GM12878 (cell line): ENCODE measurements at regions of chr11 and their contacts with region 1.

Region 1: DNA sequence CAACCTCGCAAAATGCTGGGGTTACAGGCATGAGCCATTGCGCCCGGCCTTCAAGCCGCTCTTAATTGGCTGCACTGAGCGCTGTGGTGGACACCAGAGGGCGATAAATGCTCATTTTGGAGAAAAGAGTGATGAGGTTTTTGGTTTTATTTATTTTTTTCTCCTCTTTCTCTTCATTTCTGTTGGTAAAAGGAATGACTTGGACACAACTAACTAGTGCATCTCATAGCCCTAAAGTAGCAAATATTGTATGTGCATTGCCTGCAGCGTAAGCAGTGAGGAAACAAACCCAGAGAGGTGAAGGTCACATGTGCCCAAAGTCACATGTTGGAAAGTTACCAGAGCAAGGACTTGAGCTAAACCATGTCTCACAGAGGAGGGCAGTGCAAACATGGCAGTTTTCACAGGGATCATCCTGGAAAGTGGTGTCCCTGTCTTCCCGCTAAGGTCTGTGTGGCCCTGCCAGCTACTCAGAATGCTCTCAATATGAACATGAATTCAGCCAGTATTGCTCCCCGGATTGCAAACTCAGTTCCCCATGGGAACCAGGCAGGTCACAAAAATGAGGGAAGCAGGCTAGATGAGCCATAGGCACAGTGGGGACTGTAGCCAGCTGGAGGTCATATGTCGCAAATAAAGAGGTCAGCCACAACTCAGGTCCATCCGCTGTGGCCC is 8.6 kb upstream of the CD82 start:
- DNase-seq: peak; percentile 47
- ATAC-seq: peak; percentile 63
- H3K4me3 ChIP-seq: no peak overlapping the region
- H3K27ac ChIP-seq: no peak overlapping the region
- H3K4me1 ChIP-seq: peaks cover 27% of the 10 kb centered on the region
- H3K27me3 ChIP-seq: no peaks in the 10 kb centered on the region
- CTCF ChIP-seq: peak; percentile 62 to 71 (median 70)
- EP300 ChIP-seq: no peak
- POLR2A ChIP-seq: no peak
- RAD21 ChIP-seq: peak; percentile 93

Region 2: GRCh38 chr11:44409558-44410236 is 147.2 kb before region 1 on chr11:
- CTCF ChIA-PET with region 1: no interaction called
- POLR2A ChIA-PET with region 1: no interaction called
- RAD21 ChIA-PET with region 1: no interaction called
- SMC1A ChIA-PET with region 1: no interaction called
- in situ Hi-C with region 1: no loop called
- intact Hi-C with region 1: no loop called
- DNase-seq: no peak
- ATAC-seq: peak; percentile 48
- H3K4me3 ChIP-seq: no peak overlapping the region
- H3K27ac ChIP-seq: no peak overlapping the region
- H3K4me1 ChIP-seq: no peaks in the 10 kb centered on the region
- H3K27me3 ChIP-seq: no peaks in the 10 kb centered on the region
- CTCF ChIP-seq: no peak
- EP300 ChIP-seq: no peak
- POLR2A ChIP-seq: no peak
- RAD21 ChIP-seq: no peak

Region 3: GRCh38 chr11:44494785-44495184 is 62.1 kb before region 1 on chr11:
- CTCF ChIA-PET with region 1: no interaction called
- POLR2A ChIA-PET with region 1: no interaction called
- RAD21 ChIA-PET with region 1: no interaction called
- SMC1A ChIA-PET with region 1: no interaction called
- in situ Hi-C with region 1: no loop called
- intact Hi-C with region 1: no loop called
- DNase-seq: no peak
- ATAC-seq: no peak
- H3K4me3 ChIP-seq: no peak overlapping the region
- H3K27ac ChIP-seq: no peak overlapping the region
- H3K4me1 ChIP-seq: no peaks in the 10 kb centered on the region
- H3K27me3 ChIP-seq: no peaks in the 10 kb centered on the region
- CTCF ChIP-seq: no peak
- EP300 ChIP-seq: no peak
- POLR2A ChIP-seq: no peak
- RAD21 ChIP-seq: no peak

Region 4: GRCh38 chr11:44505581-44506054 is 51.3 kb before region 1 on chr11:
- CTCF ChIA-PET with region 1: no interaction called
- POLR2A ChIA-PET with region 1: no interaction called
- RAD21 ChIA-PET with region 1: no interaction called
- SMC1A ChIA-PET with region 1: no interaction called
- in situ Hi-C with region 1: no loop called
- intact Hi-C with region 1: no loop called
- DNase-seq: no peak
- ATAC-seq: no peak
- H3K4me3 ChIP-seq: no peak overlapping the region
- H3K27ac ChIP-seq: no peak overlapping the region
- H3K4me1 ChIP-seq: 0 out of 2 replicates have a peak, but pooled peaks cover 3% of the 10 kb centered on the region
- H3K27me3 ChIP-seq: no peaks in the 10 kb centered on the region; a peak in 1 of 4 replicates
- CTCF ChIP-seq: no peak
- EP300 ChIP-seq: no peak
- POLR2A ChIP-seq: no peak
- RAD21 ChIP-seq: no peak

Region 5: DNA sequence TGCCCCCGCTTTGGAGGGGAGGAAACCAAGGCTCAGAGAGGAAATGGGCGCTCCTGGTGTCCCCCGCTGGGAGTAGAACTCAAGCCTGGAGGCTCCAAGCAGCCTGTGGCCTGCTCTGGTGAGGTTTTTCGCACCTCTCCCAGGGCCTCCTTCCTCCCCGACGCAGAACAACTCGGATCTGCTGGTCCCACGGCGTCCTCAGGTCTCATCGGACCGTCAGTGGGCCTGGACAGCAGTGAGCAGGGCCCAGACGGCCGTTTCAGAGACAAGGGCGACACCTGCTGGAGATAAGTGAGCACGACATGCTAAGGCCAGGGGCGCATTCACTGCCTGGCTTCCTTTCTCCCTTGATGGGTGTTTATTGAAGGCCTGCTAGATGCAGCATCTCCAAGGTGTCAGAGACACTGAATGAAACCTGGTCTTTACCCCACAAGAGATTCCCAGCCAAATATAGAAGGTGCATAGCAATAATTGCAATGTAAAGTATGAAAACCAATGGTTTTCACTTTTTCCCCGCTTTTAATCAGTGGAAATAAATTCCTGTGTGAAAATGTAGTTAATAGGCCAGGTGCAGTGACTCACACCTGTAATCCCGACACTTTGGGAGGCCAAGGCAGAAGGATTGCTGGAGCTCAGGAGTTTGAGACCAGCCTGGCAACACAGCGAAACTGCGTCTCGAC is 18.4 kb before region 1 on chr11:
- CTCF ChIA-PET with region 1: interaction called, 11 read pairs
- POLR2A ChIA-PET with region 1: no interaction called
- RAD21 ChIA-PET with region 1: interaction called, 3 read pairs
- SMC1A ChIA-PET with region 1: interaction called, 5 read pairs
- in situ Hi-C with region 1: no loop called
- intact Hi-C with region 1: no loop called
- DNase-seq: no peak
- ATAC-seq: peak; percentile 99
- H3K4me3 ChIP-seq: no peak overlapping the region
- H3K27ac ChIP-seq: no peak overlapping the region
- H3K4me1 ChIP-seq: no peaks in the 10 kb centered on the region
- H3K27me3 ChIP-seq: peaks cover 0 to 1% of the 10 kb centered on the region in 2 experiments; a peak in 3 of 4 replicates
- CTCF ChIP-seq: peak; percentile 94 to 96 (median 96); a peak in 5 of 6 replicates
- EP300 ChIP-seq: no peak
- POLR2A ChIP-seq: no peak
- RAD21 ChIP-seq: peak; percentile 90

Region 6: DNA sequence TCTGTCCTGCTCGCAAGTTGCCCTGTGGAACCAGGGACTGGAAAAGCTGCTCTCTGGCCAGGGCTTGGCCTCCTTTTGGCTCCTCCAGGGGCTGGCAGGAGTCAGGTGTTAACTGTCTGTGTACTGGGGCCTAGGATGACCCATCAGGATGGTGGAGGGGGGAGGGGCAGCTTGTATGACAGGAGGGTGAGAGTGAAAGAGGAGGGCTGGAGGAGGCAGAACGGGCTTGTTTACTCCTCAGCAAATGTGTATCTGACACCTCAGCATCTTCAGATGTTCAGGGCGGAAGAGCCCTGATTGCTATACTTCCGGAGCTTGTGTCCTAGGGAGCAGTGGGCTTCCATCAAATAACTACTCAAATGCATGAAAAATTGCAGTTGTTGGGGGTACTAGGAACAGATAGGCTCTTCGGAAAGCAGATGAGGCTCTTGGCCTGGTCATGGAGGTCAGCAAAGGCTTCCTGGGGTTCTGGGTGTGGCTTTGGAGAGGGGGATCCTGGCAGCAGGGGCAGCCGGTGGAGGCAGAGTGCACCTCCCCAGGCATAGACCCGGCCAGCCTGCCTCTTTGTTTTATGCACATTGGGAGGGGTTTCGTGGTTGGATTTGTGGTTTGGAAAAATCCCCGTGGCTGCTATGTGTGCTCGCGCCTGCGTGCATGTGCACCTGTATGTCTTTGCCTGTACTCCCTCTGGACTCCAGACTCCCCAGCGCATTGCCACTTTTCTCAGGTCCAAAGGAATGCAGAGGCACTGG is 39.8 kb after region 1 on chr11:
- CTCF ChIA-PET with region 1: interaction called, 88 read pairs
- POLR2A ChIA-PET with region 1: interaction called, 434 read pairs
- RAD21 ChIA-PET with region 1: interaction called, 133 read pairs
- SMC1A ChIA-PET with region 1: interaction called, 111 read pairs
- in situ Hi-C with region 1: no loop called
- intact Hi-C with region 1: no loop called
- DNase-seq: peak; percentile 84
- ATAC-seq: peak; percentile 73
- H3K4me3 ChIP-seq: peak overlapping the region; percentile 49; the same call in 1 of the 2 replicates
- H3K27ac ChIP-seq: peak overlapping the region; percentile 91
- H3K4me1 ChIP-seq: peaks cover 71% of the 10 kb centered on the region
- H3K27me3 ChIP-seq: no peaks in the 10 kb centered on the region
- CTCF ChIP-seq: no peak
- EP300 ChIP-seq: no peak
- POLR2A ChIP-seq: peak; percentile 63; the same call in 1 of the 2 replicates
- RAD21 ChIP-seq: no peak

Region 7: DNA sequence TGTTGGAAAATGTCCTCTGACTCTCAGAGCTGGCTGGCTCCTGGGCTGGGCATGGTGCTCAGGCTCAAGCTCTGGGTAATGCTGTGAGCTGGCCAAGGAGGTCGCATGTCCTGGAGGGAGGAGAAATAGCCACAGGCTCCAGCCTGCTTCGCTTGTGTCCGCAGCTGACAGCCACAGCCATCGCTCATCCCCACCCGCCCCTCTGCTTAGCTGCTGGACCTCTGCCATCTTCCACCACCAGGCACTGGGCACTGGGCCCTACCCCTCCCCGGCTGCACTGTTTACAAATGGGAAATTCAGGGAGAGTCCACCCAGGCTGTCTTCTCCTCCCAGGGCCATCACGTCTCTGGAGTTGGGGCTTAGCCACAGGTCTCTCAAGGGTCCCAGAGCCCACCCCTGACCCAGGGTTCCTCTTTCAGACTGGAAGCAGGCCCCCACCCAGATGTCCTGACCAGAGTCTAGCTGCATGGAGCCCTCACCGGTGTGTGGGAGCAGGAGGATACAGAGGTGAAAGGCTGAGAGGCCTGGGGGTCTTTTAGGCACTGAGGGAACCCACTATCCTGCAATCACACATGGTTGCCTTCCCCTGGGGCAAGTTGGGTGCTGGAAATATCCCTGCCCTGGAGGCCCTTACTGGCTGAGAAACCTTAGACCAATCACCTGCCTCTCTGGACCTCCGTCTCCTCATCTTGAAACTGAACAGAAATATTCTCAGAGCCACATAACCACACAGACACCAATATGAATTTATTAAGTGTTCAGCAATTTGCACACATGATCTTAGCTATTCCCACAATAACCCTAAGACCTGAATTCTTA is 71.2 kb after region 1 on chr11:
- CTCF ChIA-PET with region 1: interaction called, 93 read pairs
- POLR2A ChIA-PET with region 1: interaction called, 6 read pairs
- RAD21 ChIA-PET with region 1: interaction called, 21 read pairs
- SMC1A ChIA-PET with region 1: interaction called, 19 read pairs
- in situ Hi-C with region 1: no loop called
- intact Hi-C with region 1: loop called (anchors 1 kb)
- DNase-seq: no peak
- ATAC-seq: peak; percentile 80
- H3K4me3 ChIP-seq: no peak overlapping the region
- H3K27ac ChIP-seq: peak overlapping the region; percentile 36; the same call in 1 of the 2 replicates
- H3K4me1 ChIP-seq: peaks cover 13% of the 10 kb centered on the region
- H3K27me3 ChIP-seq: no peaks in the 10 kb centered on the region
- CTCF ChIP-seq: no peak
- EP300 ChIP-seq: no peak
- POLR2A ChIP-seq: no peak
- RAD21 ChIP-seq: no peak

Region 8: DNA sequence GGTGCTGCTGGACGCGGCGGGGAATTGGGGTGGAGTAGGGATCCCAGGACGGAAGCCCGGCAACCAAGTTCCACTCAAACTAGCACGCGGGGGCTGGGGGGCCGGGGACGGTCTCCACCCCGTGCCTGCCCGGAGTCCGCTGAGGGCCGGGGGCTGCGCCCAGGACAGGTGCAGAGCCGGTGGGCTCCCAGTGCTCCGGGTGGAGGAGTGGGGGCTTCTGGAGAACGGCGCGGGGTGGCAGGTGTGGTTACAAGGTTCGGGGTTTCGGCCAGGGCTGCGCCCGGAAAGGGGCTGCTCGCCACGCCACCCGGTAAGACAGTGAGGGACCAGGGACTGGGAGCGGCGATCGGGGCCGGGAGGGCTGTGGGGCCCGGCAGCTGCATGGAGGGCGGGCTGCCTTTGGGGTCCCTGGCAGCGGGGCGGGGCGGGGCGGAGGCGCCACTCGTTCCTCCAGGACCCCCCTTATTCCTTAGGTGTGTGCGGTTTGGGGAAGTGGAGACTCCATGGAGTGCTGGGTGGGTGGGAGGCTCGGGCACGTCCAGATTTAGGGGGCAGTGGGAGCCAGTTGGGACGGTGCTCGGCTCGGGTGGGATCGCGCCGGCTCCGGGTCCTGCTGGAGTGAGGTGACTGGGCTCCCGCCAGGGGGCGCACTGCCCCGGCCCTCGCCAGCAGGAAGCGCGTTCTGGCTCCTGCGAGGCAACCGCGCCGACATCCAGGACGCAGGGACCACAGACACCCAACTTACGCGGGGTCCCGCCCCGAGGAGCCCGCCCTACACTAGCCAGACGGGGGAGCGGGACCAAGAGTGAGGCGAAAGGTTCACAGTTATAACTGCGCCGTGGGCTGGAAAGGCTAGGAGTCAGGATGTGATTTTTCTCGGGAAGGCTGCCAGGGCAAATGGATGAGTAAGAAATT is 170.8 kb after region 1 on chr11:
- CTCF ChIA-PET with region 1: interaction called, 5 read pairs
- POLR2A ChIA-PET with region 1: interaction called, 8 read pairs
- RAD21 ChIA-PET with region 1: interaction called, 3 read pairs
- SMC1A ChIA-PET with region 1: no interaction called
- in situ Hi-C with region 1: no loop called
- intact Hi-C with region 1: loop called (anchors 5 kb)
- DNase-seq: no peak
- ATAC-seq: peak; percentile 90
- H3K4me3 ChIP-seq: peak overlapping the region; percentile 86
- H3K27ac ChIP-seq: no peak overlapping the region
- H3K4me1 ChIP-seq: peaks cover 11% of the 10 kb centered on the region
- H3K27me3 ChIP-seq: peaks cover 0 to 3% of the 10 kb centered on the region in 2 experiments; a peak in 3 of 4 replicates
- CTCF ChIP-seq: peak; percentile 77 to 95 (median 85)
- EP300 ChIP-seq: no peak
- POLR2A ChIP-seq: no peak
- RAD21 ChIP-seq: peak; percentile 61

Region 9: GRCh38 chr11:44893846-44894617 is 337.2 kb after region 1 on chr11:
- CTCF ChIA-PET with region 1: interaction called, 4 read pairs
- POLR2A ChIA-PET with region 1: no interaction called
- RAD21 ChIA-PET with region 1: no interaction called
- SMC1A ChIA-PET with region 1: interaction called, 5 read pairs
- in situ Hi-C with region 1: no loop called
- intact Hi-C with region 1: loop called (anchors 5 kb)
- DNase-seq: no peak
- ATAC-seq: peak; percentile 98
- H3K4me3 ChIP-seq: no peak overlapping the region
- H3K27ac ChIP-seq: no peak overlapping the region
- H3K4me1 ChIP-seq: no peaks in the 10 kb centered on the region
- H3K27me3 ChIP-seq: no peaks in the 10 kb centered on the region; a peak in 2 of 4 replicates
- CTCF ChIP-seq: peak; percentile 81 to 86 (median 83)
- EP300 ChIP-seq: no peak
- POLR2A ChIP-seq: no peak
- RAD21 ChIP-seq: peak; percentile 81